HepG2 (cell line): ENCODE measurements at regions of chr5 and their contacts with region 1.

Region 1: GRCh38 chr5:143403593-143404415 is at the start of gene NR3C1:
- DNase-seq: peak; percentile 58
- ATAC-seq: peak; percentile 68
- H3K4me3 ChIP-seq: peak within 1 kb of the TSS; percentile 80 to 96 (median 95)
- H3K27ac ChIP-seq: peak within 1 kb of the TSS; percentile 96
- H3K4me1 ChIP-seq: peaks cover 44% of the 10 kb centered on the region
- H3K27me3 ChIP-seq: no peaks in the 10 kb centered on the region; a peak in 1 of 5 replicates
- CTCF ChIP-seq: peak; percentile 56
- EP300 ChIP-seq: no peak
- POLR2A ChIP-seq: peak; percentile 25 to 61; a peak in 3 of 4 replicates
- RAD21 ChIP-seq: peak; percentile 57
- total RNA-seq, gene NR3C1: 24.3 and 30.0 TPM in 2 replicates

Region 2: GRCh38 chr5:143002459-143003328 is 401.1 kb before region 1 on chr5:
- CTCF ChIA-PET with region 1: no interaction called
- POLR2A ChIA-PET with region 1: no interaction called
- in situ Hi-C with region 1: no loop called
- intact Hi-C with region 1: loop called (anchors 5 kb)
- DNase-seq: no peak
- ATAC-seq: peak; percentile 65
- H3K4me3 ChIP-seq: no peak overlapping the region
- H3K27ac ChIP-seq: peak overlapping the region; percentile 2
- H3K4me1 ChIP-seq: peaks cover 19% of the 10 kb centered on the region
- H3K27me3 ChIP-seq: no peaks in the 10 kb centered on the region
- CTCF ChIP-seq: peak; percentile 57
- EP300 ChIP-seq: no peak
- POLR2A ChIP-seq: no peak
- RAD21 ChIP-seq: no peak

Region 3: GRCh38 chr5:143309661-143310431 is 94.0 kb before region 1 on chr5:
- CTCF ChIA-PET with region 1: no interaction called
- POLR2A ChIA-PET with region 1: no interaction called
- in situ Hi-C with region 1: no loop called
- intact Hi-C with region 1: loop called (anchors 5 kb)
- DNase-seq: no peak
- ATAC-seq: no peak
- H3K4me3 ChIP-seq: no peak overlapping the region
- H3K27ac ChIP-seq: no peak overlapping the region
- H3K4me1 ChIP-seq: no peaks in the 10 kb centered on the region
- H3K27me3 ChIP-seq: no peaks in the 10 kb centered on the region
- CTCF ChIP-seq: no peak
- EP300 ChIP-seq: no peak
- POLR2A ChIP-seq: no peak
- RAD21 ChIP-seq: no peak

Region 4: DNA sequence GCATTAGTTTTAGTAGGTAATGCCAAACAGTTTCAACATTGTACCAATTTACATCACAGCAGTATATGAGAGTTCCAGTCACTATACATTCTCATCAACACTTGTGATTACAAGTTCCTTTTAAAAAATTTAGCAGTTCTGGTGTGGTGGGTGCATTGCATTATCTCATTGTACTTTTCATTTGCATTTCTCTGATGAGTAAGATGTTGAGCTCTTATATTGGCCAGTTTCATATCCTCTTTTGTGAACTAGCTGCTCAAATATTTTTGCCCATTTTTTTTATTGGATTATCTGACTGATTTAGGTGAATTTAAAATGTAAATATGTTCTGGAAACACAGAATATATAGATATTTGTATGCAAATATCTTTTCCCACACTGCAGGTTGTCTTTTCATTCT is 160.6 kb after region 1 on chr5:
- CTCF ChIA-PET with region 1: no interaction called
- POLR2A ChIA-PET with region 1: interaction called, 3 read pairs
- in situ Hi-C with region 1: no loop called
- intact Hi-C with region 1: loop called (anchors 10 kb)
- DNase-seq: no peak
- ATAC-seq: no peak
- H3K4me3 ChIP-seq: no peak overlapping the region
- H3K27ac ChIP-seq: no peak overlapping the region
- H3K4me1 ChIP-seq: peaks cover 54% of the 10 kb centered on the region
- H3K27me3 ChIP-seq: no peaks in the 10 kb centered on the region
- CTCF ChIP-seq: no peak
- EP300 ChIP-seq: no peak
- POLR2A ChIP-seq: no peak
- RAD21 ChIP-seq: no peak

Region 5: DNA sequence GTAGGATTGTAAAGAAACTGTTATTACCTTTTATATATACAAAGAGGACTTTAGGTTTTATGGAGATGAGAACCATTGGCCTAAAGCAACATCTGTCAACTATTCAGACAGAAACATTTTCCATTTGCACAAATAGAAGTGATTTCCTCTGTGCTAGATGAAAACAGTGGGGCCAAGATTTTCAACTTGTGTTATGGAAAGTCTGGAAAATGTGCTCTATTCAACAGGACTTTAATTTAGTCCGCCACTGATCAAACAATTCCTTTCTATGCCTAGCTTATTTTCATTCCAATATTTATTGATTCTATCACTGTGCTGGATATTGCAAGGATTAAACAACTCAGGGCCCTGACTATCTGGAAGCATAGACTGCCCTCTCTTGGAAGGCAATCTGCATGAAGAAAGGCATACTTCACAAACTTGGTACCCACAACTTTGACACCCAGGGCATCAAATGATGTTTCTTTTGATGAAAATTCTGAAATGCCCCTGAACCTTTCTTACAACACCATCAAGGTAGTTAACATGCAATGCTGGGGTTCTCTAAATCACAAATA is 281.5 kb after region 1 on chr5:
- CTCF ChIA-PET with region 1: no interaction called
- POLR2A ChIA-PET with region 1: interaction called, 6 read pairs
- in situ Hi-C with region 1: no loop called
- intact Hi-C with region 1: loop called (anchors 5 kb)
- DNase-seq: peak; percentile 24
- ATAC-seq: no peak
- H3K4me3 ChIP-seq: no peak overlapping the region
- H3K27ac ChIP-seq: no peak overlapping the region
- H3K4me1 ChIP-seq: peaks cover 34% of the 10 kb centered on the region
- H3K27me3 ChIP-seq: no peaks in the 10 kb centered on the region; a peak in 1 of 5 replicates
- CTCF ChIP-seq: peak; percentile 46
- EP300 ChIP-seq: no peak
- POLR2A ChIP-seq: no peak
- RAD21 ChIP-seq: no peak